ENCODE measurements at regions of chr1 and their contacts with region 1.

Region 1: GRCh38 chr1:87953732-87954344 is 625.2 kb downstream of the LMO4 start:
- DNase-seq: peak; percentile 59
- ATAC-seq: peak; percentile 70
- H3K4me3 Mint-ChIP-seq: no peak overlapping the region
- H3K27ac Mint-ChIP-seq: no peak overlapping the region
- H3K4me1 Mint-ChIP-seq: no peaks in the 10 kb centered on the region
- H3K27me3 Mint-ChIP-seq: peaks cover 10% of the 10 kb centered on the region

Region 2: DNA sequence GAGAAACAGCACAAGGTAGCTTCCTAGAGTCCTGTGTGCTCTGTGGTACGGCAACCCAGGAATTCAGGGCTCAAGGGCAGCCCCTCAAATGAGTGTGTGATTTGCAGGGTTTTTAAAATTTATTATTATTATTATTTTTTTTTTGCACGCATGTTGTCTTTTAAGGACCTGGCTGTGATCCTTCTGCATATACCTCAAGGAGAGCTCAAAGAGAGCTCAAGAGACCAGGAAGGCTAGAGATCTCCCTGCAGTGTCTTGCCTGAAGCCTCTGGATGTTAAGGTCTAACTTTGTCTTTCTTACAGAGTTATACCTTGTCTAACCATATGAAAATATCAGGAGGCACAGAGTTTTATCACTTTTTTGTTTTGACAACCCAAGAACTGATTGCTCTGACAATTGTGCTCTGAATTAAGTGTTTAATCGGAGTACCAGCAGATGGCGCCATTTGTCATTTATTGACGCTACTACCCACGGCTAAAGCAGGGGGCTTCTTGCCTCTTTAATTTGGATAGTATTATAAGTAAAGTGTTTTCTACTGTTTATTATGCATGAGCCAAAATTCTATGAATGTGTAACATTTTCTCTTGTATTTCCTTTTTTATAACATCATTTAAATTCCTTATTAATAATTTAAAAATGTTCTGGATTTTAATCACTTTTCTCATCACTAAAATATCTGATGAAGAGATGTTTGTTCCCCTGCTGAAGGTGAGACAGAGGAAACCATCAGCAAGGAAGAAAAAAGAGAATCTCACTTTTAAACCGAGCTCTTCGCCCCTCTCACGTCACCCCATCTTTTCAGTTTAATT is 660.9 kb before region 1 on chr1:
- CTCF ChIA-PET with region 1: interaction called, 22 read pairs
- POLR2A ChIA-PET with region 1: no interaction called
- DNase-seq: peak; percentile 76
- ATAC-seq: peak; percentile 63
- H3K4me3 Mint-ChIP-seq: no peak overlapping the region
- H3K27ac Mint-ChIP-seq: no peak overlapping the region
- H3K4me1 Mint-ChIP-seq: no peaks in the 10 kb centered on the region
- H3K27me3 Mint-ChIP-seq: peaks cover 6% of the 10 kb centered on the region

Region 3: DNA sequence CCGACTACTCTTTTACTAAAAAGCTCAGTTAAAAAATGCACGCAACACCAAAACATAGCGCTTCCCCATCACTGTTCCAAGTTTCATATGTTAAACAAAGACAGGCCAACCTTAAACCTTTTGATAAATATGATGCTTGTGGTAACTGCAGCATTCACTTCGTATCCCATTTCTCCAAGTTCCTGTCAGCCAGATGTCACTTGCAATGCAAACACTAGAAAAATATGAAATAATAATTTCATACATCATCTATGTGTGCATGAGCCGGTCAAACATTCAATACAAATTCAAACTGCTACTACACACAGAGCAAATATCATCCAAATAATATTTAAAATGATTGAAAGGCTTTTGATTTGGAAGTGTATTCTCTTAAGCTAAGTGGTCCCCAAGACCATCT is 11.4 kb after region 1 on chr1:
- CTCF ChIA-PET with region 1: interaction called, 10 read pairs
- POLR2A ChIA-PET with region 1: no interaction called
- DNase-seq: no peak
- ATAC-seq: no peak
- H3K4me3 Mint-ChIP-seq: no peak overlapping the region
- H3K27ac Mint-ChIP-seq: no peak overlapping the region
- H3K4me1 Mint-ChIP-seq: no peaks in the 10 kb centered on the region
- H3K27me3 Mint-ChIP-seq: no peaks in the 10 kb centered on the region